Breast epithelium (tissue), 4 donors: ENCODE measurements at regions of chr9 and their contacts with region 1.

Region 1: GRCh38 chr9:136865735-136866103 is 389 bp downstream of the EDF1 start:
- DNase-seq: peak in 1 of 2 donors; percentile 52
- H3K4me3 ChIP-seq: peak overlapping the region; percentile 85 to 94 (median 86)
- H3K27ac ChIP-seq: peak overlapping the region; percentile 90 to 96
- H3K4me1 ChIP-seq: peaks cover 5 to 6% of the 10 kb centered on the region in 2 donors
- H3K27me3 ChIP-seq: no peaks in the 10 kb centered on the region
- CTCF ChIP-seq: no peak
- POLR2A ChIP-seq: no peak

Region 2: DNA sequence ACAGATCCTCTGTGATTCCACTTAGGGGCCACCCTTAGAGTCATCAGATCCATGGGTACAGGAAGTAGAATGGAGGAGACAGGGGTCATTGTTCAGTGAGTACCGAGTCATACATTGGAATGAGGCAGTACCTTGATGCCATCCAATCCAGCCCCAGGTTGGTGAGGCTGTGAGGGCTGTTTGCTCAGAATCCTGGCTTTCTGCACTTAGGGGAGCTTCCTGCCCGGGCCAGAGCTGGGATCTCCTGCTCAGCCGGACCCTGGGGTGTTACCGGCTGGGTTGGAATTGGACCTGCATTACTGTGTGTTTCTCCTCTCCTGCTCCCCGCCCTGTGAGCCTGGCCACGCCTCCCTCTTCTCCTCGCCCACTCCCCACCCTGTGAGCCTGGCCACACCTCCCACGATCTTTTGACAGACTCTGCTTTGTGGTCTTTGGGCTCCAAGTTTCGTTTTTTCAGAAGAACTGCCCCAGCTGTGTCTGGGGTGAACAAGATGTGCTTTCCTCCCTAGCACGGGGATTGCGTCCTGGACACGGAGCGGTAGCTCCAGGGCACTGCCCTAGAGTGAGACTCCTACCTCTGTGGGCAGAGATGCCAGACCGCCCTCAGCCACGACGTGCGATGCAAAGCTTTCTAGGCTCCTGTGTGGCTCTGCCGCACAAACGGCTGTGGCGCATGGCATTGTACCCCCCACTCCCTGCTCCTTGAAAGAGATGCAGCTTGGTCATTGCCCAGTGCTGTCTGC is 36.0 kb after region 1 on chr9:
- intact Hi-C with region 1: loop called (anchors 1 kb)
- DNase-seq: peak in 1 of 2 donors; percentile 68
- H3K4me3 ChIP-seq: peak overlapping the region; percentile 9 to 56 (median 40)
- H3K27ac ChIP-seq: peak overlapping the region; percentile 91 to 93
- H3K4me1 ChIP-seq: peaks cover 11 to 23% of the 10 kb centered on the region in 2 donors
- H3K27me3 ChIP-seq: no peaks in the 10 kb centered on the region
- CTCF ChIP-seq: no peak
- POLR2A ChIP-seq: no peak